ENCODE measurements at regions of chr1 and their contacts with region 1.

Region 1: GRCh38 chr1:228515200-228515834 is 28.1 kb downstream of the RNF187 start:
- DNase-seq: peak; percentile 22
- ATAC-seq: peak; percentile 70
- H3K4me3 ChIP-seq: no peak overlapping the region
- H3K27ac ChIP-seq: no peak overlapping the region
- H3K4me1 ChIP-seq: no peaks in the 10 kb centered on the region
- H3K27me3 ChIP-seq: peaks cover 28% of the 10 kb centered on the region; the same call in 1 of the 2 replicates
- CTCF ChIP-seq: peak; percentile 61 to 95 (median 73)
- POLR2A ChIP-seq: no peak
- RAD21 ChIP-seq: peak; percentile 93

Region 2: GRCh38 chr1:227762233-227762911 is 752.9 kb before region 1 on chr1:
- CTCF ChIA-PET with region 1: no interaction called
- POLR2A ChIA-PET with region 1: no interaction called
- RAD21 ChIA-PET with region 1: no interaction called
- intact Hi-C with region 1: loop called (anchors 5 kb)
- DNase-seq: peak; percentile 57
- ATAC-seq: peak; percentile 95
- H3K4me3 ChIP-seq: no peak overlapping the region
- H3K27ac ChIP-seq: no peak overlapping the region; the same call in 1 of the 2 replicates
- H3K4me1 ChIP-seq: peaks cover 3 to 18% of the 10 kb centered on the region in 2 experiments; a peak in 2 of 4 replicates
- H3K27me3 ChIP-seq: no peaks in the 10 kb centered on the region
- CTCF ChIP-seq: peak; percentile 90 to 95 (median 93)
- POLR2A ChIP-seq: no peak
- RAD21 ChIP-seq: peak; percentile 99

Region 3: DNA sequence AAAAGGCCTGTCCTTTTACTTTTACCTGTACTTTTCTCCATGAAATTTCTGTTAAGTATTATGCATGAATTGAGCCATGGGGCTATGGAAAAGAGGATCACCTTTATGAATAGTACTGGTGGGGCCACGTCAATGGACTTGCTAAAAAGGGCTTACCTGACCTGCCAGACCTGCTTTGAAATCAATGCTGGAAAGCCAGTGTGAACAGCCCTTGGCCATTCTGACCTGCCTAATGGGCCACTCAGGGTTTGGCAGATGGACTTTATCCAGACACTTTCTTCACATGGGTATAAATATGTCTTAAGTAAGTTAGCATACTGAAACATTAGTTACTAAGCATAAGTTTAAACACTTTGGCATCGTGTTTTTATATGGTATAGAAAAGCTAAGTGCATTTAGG is 383.6 kb before region 1 on chr1:
- CTCF ChIA-PET with region 1: no interaction called
- POLR2A ChIA-PET with region 1: no interaction called
- RAD21 ChIA-PET with region 1: no interaction called
- intact Hi-C with region 1: loop called (anchors 5 kb)
- DNase-seq: no peak
- ATAC-seq: no peak
- H3K4me3 ChIP-seq: no peak overlapping the region
- H3K27ac ChIP-seq: 0 out of 2 replicates have a peak overlapping the region, but pooled peaks have one; percentile 6
- H3K4me1 ChIP-seq: peaks cover 7 to 18% of the 10 kb centered on the region in 2 experiments
- H3K27me3 ChIP-seq: peaks cover 3% of the 10 kb centered on the region; the same call in 1 of the 2 replicates
- CTCF ChIP-seq: no peak
- POLR2A ChIP-seq: no peak
- RAD21 ChIP-seq: no peak

Region 4: GRCh38 chr1:228378090-228378872 is 137.0 kb before region 1 on chr1:
- CTCF ChIA-PET with region 1: no interaction called
- POLR2A ChIA-PET with region 1: no interaction called
- RAD21 ChIA-PET with region 1: no interaction called
- intact Hi-C with region 1: loop called (anchors 2 kb)
- DNase-seq: peak; percentile 56
- ATAC-seq: peak; percentile 88
- H3K4me3 ChIP-seq: peak overlapping the region; percentile 58 to 66
- H3K27ac ChIP-seq: peak overlapping the region; percentile 66
- H3K4me1 ChIP-seq: peaks cover 5 to 18% of the 10 kb centered on the region in 2 experiments
- H3K27me3 ChIP-seq: no peaks in the 10 kb centered on the region
- CTCF ChIP-seq: peak in 2 of 3 experiments; percentile 58 to 65; a peak in 5 of 6 replicates
- POLR2A ChIP-seq: no peak
- RAD21 ChIP-seq: peak; percentile 87

Measured in HCT116 (cell line).